ENCODE measurements at regions of chr7 and their contacts with region 1.

Region 1: GRCh38 chr7:84092207-84092606 is 102.4 kb downstream of the SEMA3A start:
- DNase-seq: no peak
- ATAC-seq: no peak
- H3K4me3 ChIP-seq: no peak overlapping the region
- H3K27ac ChIP-seq: no peak overlapping the region
- H3K4me1 ChIP-seq: peaks cover 27% of the 10 kb centered on the region
- H3K27me3 ChIP-seq: no peaks in the 10 kb centered on the region
- CTCF ChIP-seq: no peak
- EP300 ChIP-seq: no peak
- POLR2A ChIP-seq: no peak
- RAD21 ChIP-seq: no peak

Region 2: GRCh38 chr7:84013710-84014171 is 78.5 kb before region 1 on chr7:
- CTCF ChIA-PET with region 1: no interaction called
- POLR2A ChIA-PET with region 1: no interaction called
- in situ Hi-C with region 1: no loop called
- intact Hi-C with region 1: loop called (anchors 5 kb)
- DNase-seq: no peak
- ATAC-seq: no peak
- H3K4me3 ChIP-seq: no peak overlapping the region
- H3K27ac ChIP-seq: no peak overlapping the region
- H3K4me1 ChIP-seq: 0 out of 2 replicates have a peak, but pooled peaks cover 4% of the 10 kb centered on the region
- H3K27me3 ChIP-seq: no peaks in the 10 kb centered on the region
- CTCF ChIP-seq: no peak
- EP300 ChIP-seq: no peak
- POLR2A ChIP-seq: no peak
- RAD21 ChIP-seq: no peak

Region 3: GRCh38 chr7:84291756-84292155 is 199.5 kb after region 1 on chr7:
- CTCF ChIA-PET with region 1: no interaction called
- POLR2A ChIA-PET with region 1: no interaction called
- in situ Hi-C with region 1: no loop called
- intact Hi-C with region 1: no loop called
- DNase-seq: no peak
- ATAC-seq: no peak
- H3K4me3 ChIP-seq: no peak overlapping the region
- H3K27ac ChIP-seq: no peak overlapping the region
- H3K4me1 ChIP-seq: no peaks in the 10 kb centered on the region
- H3K27me3 ChIP-seq: no peaks in the 10 kb centered on the region
- CTCF ChIP-seq: no peak
- EP300 ChIP-seq: no peak
- POLR2A ChIP-seq: no peak
- RAD21 ChIP-seq: no peak

Measured in HepG2 (cell line).